ENCODE measurements at regions of chr17 and their contacts with region 1.

Region 1: GRCh38 chr17:18141210-18141803 is 32.8 kb downstream of the MYO15A start:
- DNase-seq: no peak

Region 2: DNA sequence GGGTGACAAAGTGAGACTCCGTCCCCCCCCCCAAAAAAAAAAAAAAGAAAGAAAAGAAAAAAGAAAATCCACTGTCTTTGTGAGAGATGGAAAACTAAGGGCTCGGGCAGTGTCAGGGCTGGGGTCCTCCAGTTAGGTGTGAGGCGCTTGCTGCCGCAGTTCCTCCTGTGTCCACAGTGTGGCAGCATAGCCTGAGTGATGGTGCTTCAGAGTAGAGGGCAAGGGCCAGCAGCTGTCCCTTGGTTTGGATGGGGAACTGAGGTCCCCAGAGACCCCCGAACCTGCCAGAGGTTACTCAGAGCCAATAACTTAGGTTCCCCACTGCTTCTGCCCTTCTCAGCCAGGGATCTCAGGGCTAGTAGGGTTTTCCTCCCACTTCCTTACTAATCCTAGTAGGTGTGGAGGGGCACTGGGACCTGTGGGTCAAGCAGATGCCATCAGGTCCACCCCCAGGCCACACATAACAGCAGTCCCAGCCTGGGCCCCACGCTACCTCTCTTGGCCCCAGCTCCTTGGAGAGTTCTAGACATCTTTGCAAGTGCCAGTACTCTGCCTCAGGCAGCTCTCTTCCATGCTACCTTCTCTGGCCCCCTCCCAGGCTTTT is 76.2 kb after region 1 on chr17:
- intact Hi-C with region 1: loop called (anchors 5 kb)
- DNase-seq: peak; percentile 89

Measured in cardiac septum (tissue), 1 donor.